Tibial artery (tissue), 4 donors: ENCODE measurements at regions of chr2 and their contacts with region 1.

Region 1: DNA sequence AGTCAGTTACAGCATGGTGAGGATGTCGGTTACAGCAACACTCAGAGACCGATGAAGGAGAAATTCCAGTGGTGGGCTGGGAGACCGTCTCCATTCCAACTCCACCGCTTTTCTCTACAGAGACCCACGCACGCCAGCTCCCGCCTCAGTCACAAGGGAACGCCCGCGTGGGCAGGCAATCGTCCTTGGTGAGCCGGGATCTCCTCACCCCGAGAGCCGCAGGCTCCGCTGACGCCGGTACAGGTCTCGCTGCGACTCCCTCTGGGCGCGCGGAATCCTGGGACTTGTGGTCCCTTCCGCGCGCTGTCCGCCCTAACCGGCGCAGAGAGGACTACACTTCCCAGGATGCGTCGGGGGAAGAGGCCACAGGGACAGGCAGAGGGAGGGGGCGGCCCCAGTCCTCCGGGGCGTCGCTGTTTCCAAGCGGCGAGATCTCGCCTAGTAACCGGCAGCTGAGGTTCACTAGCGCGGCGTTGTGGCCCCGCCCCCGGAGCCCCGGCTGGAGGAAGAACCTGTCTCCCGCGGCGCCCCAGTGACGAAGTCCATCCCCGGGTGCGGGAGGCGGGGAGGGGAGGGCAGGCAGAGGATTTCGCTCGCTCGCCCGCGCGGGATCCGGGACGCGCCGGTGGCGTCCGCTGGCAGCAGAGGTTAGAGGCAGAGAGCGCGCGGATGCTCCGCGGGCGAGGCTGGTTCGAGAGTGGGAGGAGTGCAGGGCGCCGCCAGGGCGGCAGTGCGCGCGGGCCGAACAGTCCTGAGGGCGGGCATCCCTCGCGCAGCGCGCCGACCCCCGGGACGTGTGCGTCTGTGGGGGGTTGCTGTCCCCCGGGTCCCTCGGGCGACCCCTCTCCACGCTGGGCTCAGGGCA is at the start of gene EML6:
- DNase-seq: peak; percentile 99
- H3K4me3 ChIP-seq: peak within 1 kb of the TSS; percentile 82 to 92
- H3K27ac ChIP-seq: peak within 1 kb of the TSS; percentile 70 to 83
- H3K4me1 ChIP-seq: peaks cover 0 to 18% (median 9%) of the 10 kb centered on the region in 4 donors
- H3K27me3 ChIP-seq: no peaks in the 10 kb centered on the region
- CTCF ChIP-seq: peak in 1 of 2 experiments; percentile 21

Region 2: DNA sequence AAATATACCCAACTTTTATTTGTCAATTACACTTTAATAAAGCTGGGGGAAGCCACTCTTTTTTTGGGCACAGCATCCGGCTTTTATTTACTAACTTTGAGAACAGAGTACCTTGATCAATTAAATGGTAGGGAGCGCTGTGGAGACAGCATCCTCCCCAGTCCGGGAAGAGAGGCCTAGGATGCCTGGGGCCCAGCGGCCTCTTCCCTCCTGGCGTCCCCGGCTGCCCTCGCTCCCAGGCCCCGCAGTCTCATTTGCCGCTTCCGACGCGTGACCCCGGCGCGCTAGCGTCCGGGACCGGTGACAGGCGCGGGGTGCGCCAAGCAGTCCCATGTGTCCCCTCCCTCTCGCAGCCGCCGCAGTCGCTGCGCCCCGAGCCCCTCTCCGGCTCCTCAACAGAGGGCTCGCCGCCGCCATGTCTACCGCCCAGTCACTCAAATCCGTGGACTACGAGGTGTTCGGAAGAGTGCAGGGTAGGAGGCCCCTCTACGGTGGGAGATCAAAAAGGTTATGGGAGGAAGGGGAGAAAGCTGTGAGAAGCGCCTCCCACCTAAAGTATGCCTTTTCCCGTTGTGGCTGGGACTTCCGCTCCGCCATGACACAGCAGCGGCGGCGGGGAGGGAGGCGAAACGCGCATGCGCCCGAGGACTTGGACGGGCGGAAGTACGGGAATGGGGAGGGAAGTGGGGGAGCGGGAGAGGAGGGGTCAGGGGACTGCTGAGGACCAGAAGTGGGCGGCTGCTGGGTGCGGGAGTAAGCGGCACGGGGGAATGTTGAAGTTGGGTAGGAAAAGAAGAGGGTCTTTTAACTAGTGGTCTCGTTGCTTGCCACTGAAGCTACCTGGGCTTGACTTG is 607.9 kb before region 1 on chr2 and contains the start of gene ACYP2:
- intact Hi-C with region 1: loop called (anchors 10 kb)
- DNase-seq: peak; percentile 95 to 97
- H3K4me3 ChIP-seq: peak within 1 kb of the TSS; percentile 72 to 74
- H3K27ac ChIP-seq: peak within 1 kb of the TSS; percentile 98
- H3K4me1 ChIP-seq: peaks cover 0 to 5% (median 2%) of the 10 kb centered on the region in 4 donors
- H3K27me3 ChIP-seq: no peaks in the 10 kb centered on the region
- CTCF ChIP-seq: peak in 1 of 2 experiments; percentile 14

Region 3: DNA sequence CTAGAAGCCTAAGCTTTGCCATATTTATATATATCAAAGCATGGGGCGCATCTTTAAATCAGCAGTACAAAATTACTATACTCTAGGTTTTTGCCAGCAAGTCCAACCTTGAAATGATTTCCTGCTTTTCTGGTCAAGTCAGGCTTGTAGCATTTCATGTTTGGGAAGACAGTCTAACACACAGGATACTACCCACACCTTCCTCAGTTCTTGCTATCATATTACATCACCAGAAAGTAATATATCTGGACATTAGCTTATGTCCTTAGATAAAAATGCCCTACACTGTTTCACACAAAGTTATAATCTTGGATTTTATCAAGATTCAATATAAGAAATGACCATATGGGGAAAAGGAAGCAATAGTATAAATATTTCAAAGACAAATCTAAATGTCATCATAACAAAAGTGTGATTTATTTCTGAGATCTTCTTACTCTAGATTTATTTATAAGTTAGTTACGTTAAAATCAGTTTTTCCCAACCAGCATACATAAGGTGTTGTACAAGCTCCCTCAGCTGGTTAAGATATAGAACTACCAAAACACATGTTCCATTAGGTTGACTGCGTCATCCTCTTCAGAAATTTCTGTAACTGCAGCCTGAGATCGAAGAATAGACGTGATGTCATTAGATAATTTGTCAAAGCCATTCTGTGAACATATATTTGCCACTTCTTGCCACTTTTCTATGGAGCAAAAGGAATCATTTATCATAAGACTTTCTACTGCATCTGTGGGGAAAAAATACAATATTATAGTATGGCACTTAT is 452.1 kb after region 1 on chr2:
- intact Hi-C with region 1: loop called (anchors 10 kb)
- DNase-seq: no peak
- H3K4me3 ChIP-seq: no peak overlapping the region
- H3K27ac ChIP-seq: no peak overlapping the region
- H3K4me1 ChIP-seq: peaks cover 0 to 17% (median 0%) of the 10 kb centered on the region in 4 donors
- H3K27me3 ChIP-seq: no peaks in the 10 kb centered on the region
- CTCF ChIP-seq: peak; percentile 54 to 80